AG04449 (cell line): ENCODE measurements at regions of chr19 and their contacts with region 1.

Region 1: GRCh38 chr19:39846176-39846677 is at the start of gene FBL:
- DNase-seq: peak; percentile 19
- H3K4me3 ChIP-seq: peak within 1 kb of the TSS; percentile 90
- CTCF ChIP-seq: no peak

Region 2: GRCh38 chr19:39765091-39766076 is 80.8 kb before region 1 on chr19:
- CTCF ChIA-PET with region 1: interaction called, 37 read pairs
- POLR2A ChIA-PET with region 1: no interaction called
- DNase-seq: no peak
- H3K4me3 ChIP-seq: no peak overlapping the region
- CTCF ChIP-seq: peak; percentile 77

Region 3: GRCh38 chr19:39792999-39793546 is 53.2 kb before region 1 on chr19:
- CTCF ChIA-PET with region 1: interaction called, 124 read pairs
- POLR2A ChIA-PET with region 1: no interaction called
- DNase-seq: peak; percentile 19
- H3K4me3 ChIP-seq: peak overlapping the region; percentile 66
- CTCF ChIP-seq: peak; percentile 94

Region 4: DNA sequence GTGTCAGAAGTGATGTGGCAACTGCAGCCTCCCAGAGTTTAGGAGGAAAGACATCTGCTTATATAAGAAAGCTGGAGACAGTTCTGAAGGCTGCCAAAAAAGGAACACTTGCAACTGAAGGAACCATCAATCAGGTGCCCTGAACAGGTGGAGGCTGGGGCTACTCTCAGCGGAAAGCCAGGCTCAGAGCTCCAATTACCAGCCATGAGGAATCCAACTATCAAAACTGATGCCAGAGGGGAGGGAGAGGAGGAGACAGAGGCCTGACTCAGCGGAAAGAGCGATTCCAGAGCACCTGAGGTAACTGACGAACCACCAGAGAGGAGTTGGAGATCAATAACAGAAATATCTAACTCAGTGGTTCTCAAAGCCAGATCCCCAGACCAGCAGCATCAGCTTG is 43.3 kb before region 1 on chr19:
- CTCF ChIA-PET with region 1: interaction called, 13 read pairs
- POLR2A ChIA-PET with region 1: no interaction called
- DNase-seq: no peak
- H3K4me3 ChIP-seq: no peak overlapping the region
- CTCF ChIP-seq: no peak

Region 5: DNA sequence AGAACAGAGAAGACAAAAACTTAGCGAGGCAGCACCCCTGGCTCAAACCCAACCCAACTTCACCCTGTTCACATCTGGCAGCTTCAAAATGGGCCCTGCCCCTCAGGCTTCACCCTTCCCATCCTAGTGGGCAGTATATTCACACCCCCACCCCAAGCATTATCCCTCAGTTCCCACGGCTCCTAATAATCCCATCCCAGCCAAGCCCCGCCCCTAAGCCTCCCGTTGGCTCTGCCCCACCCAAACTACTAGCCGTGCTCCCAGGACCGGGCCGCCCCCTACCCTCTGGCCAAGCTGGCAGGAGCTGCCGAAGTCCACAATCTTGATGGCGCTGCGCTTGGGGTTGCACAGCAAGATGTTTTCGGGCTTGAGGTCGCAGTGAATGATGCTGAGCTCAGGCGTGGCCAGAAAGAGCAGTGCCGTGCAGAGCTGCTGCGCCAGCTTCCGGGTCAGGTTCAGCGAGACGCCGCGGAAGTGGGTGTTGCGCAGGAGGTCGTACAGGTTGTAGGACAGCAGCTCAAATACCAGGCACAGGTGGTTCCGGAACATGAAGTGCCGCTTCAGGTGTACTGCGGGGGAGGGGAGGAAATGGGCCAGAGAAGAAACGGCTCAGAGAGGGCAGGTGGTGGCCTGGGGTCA is 18.1 kb before region 1 on chr19:
- CTCF ChIA-PET with region 1: interaction called, 40 read pairs
- POLR2A ChIA-PET with region 1: interaction called, 10 read pairs
- DNase-seq: no peak
- H3K4me3 ChIP-seq: no peak overlapping the region
- CTCF ChIP-seq: no peak

Region 6: DNA sequence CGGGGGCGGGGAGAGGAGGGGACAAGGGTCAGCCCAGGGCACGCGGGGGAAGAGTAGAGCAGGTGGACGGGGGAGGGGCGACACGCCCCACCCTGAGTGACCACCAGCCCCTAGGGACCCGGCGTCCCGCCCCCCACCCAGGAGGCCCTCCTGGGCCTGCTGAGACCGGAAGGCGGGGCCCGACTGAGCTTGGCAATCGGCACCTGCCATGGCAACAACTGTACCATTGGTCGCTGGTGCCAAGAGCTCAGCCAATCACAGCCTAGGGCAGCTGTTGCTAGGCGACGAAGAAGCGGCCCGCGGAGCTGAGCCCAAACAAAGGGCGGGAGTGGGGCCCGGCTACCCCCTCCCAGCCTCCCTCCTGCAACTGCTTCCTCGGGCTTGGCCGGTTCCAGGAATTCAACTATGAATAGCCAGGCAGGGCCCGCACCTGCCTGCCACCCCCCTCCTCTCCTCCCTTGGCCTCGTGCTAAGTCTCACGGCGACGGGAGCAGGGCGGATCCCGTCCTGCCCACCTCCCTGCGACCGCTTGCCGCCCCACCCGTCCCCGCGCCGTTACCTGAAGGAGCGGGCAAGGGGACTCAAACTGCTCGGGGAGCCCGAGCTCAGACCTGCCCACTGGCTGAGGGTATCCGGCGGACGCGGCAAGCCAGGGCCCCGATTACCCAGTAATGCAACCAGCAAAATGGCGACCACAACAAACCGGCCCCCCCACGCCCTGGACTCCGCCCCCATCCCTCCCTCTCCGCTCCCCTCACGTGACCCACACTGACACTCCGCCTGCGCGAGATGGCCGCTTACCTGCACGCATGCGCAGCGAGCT is 12.6 kb before region 1 on chr19 and contains the start of gene DYRK1B:
- CTCF ChIA-PET with region 1: interaction called, 40 read pairs
- POLR2A ChIA-PET with region 1: interaction called, 10 read pairs
- DNase-seq: peak; percentile 73
- H3K4me3 ChIP-seq: peak within 1 kb of the TSS; percentile 90
- CTCF ChIP-seq: no peak

Region 7: DNA sequence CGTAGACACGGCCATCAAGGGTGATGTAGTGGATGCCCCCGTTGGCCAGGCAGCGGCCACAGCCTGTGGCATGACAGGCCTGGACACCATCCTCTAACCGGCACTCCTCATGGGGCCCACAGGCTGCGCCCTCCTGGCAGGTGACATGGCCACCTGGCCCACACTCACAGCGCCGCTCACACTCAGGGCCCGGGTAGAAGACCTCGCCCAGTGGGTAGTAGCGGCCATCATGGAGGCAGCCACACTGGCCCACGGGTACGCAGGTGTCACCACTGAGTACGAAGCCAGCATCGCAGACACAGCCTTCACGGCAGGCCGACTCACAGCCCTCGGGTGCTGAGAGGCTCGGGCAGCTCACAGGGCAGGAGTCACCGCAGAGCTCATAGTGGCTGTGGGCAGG is 27.2 kb after region 1 on chr19:
- CTCF ChIA-PET with region 1: no interaction called
- POLR2A ChIA-PET with region 1: no interaction called
- DNase-seq: no peak
- H3K4me3 ChIP-seq: no peak overlapping the region
- CTCF ChIP-seq: no peak

Region 8: DNA sequence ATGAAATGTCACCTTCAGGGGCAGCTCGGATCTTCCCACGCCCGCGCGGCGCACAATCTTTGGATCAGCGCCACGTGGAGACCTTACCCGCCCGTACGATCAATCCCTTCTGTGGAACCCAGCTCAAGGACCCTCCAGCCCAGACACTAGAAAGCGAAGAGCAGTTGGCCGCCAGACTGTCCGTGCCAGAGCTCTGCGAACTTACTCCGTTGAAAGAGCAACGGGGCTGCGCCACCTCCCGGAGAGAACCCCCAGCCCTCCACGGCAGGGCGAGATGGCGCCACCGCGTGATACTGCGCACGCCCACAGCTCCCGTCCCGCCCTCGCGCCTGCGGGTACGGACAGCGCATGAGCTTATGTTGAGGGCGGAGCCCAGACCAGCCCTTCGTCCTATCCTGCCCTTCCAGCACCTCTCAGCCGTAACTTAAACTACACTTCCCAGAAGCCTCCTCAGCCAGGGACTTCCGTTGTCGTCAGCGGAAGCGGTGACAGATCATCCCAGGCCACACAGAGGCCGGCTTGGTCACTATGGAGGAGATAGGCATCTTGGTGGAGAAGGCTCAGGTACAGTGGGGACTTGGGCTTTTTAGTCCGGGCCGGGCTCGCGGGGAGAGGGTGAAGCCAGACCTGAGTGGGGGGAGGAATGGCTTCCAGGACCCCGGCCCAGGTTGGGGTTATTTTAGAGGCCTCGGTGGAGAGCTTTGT is 124.6 kb after region 1 on chr19 and contains the start of gene PSMC4:
- CTCF ChIA-PET with region 1: interaction called, 41 read pairs
- POLR2A ChIA-PET with region 1: interaction called, 9 read pairs
- DNase-seq: peak; percentile 96
- H3K4me3 ChIP-seq: peak within 1 kb of the TSS; percentile 96
- CTCF ChIP-seq: peak; percentile 86